ENCODE measurements at regions of chr3 and their contacts with region 1.

Region 1: GRCh38 chr3:158727206-158728060 is 4.8 kb downstream of the RARRES1 start:
- DNase-seq: no peak
- ATAC-seq: peak; percentile 65
- H3K4me3 ChIP-seq: peak overlapping the region; percentile 24
- H3K27ac ChIP-seq: peak overlapping the region; percentile 17
- H3K4me1 ChIP-seq: peaks cover 28% of the 10 kb centered on the region
- H3K27me3 ChIP-seq: no peaks in the 10 kb centered on the region
- CTCF ChIP-seq: peak; percentile 89

Region 2: GRCh38 chr3:158121295-158121694 is 606.1 kb before region 1 on chr3:
- intact Hi-C with region 1: no loop called
- DNase-seq: no peak
- ATAC-seq: no peak
- H3K4me3 ChIP-seq: no peak overlapping the region
- H3K27ac ChIP-seq: no peak overlapping the region
- H3K4me1 ChIP-seq: no peaks in the 10 kb centered on the region
- H3K27me3 ChIP-seq: no peaks in the 10 kb centered on the region
- CTCF ChIP-seq: no peak

Region 3: DNA sequence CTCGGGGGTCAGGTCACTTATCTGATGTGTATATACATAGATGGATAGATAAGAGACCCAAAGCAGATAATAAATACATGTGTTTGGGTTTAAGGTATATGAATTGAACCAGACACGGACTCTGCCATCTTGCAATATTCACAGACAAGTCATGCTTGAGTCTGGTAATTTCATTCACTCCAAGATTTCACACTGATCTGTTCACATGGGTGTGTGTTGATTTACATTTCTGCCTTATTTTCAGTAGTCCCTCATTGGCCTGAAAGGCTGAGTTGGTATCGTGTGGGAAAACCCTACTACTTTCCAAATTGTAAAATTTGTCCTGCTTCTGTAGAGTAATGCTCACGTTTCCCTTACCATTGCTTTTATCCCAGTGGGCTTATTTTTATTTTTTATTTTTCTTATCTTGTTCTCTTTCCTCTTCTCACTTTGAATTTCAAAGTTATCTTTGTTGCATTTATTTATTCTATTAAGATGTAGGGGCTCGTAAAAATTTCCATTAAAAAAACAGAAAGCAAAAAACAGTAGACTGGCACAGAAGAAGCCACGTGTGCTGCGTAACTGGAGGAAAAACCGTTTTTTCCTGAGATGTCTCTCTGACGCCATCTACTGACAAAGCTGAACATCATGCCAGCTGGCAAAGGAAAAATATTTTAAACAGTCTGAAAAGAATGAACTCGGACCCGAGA is 63.6 kb after region 1 on chr3:
- intact Hi-C with region 1: loop called (anchors 5 kb)
- DNase-seq: no peak
- ATAC-seq: peak; percentile 82
- H3K4me3 ChIP-seq: peak overlapping the region; percentile 22
- H3K27ac ChIP-seq: no peak overlapping the region
- H3K4me1 ChIP-seq: peaks cover 9% of the 10 kb centered on the region
- H3K27me3 ChIP-seq: no peaks in the 10 kb centered on the region
- CTCF ChIP-seq: peak; percentile 86

Region 4: DNA sequence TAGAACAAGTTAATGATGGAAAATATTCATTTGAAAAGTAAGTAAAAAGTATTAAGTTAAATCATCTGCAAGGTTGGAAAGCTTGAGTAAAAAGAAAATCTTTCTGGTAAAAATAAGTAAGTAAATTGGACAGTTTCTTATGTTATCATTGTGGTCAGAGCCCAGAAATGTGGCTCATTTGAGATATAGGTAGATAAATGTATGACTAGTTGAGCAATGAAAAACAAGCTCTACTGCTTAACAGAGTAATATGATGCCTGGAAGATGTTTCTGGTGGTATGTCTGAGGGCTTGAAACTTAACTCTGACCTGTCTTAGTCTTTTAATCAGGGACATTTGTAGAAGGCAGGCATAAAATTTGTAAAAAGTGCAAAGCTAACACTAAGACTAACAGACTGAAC is 518.4 kb after region 1 on chr3:
- intact Hi-C with region 1: no loop called
- DNase-seq: no peak
- ATAC-seq: no peak
- H3K4me3 ChIP-seq: no peak overlapping the region
- H3K27ac ChIP-seq: no peak overlapping the region
- H3K4me1 ChIP-seq: no peaks in the 10 kb centered on the region
- H3K27me3 ChIP-seq: no peaks in the 10 kb centered on the region
- CTCF ChIP-seq: no peak

Region 5: DNA sequence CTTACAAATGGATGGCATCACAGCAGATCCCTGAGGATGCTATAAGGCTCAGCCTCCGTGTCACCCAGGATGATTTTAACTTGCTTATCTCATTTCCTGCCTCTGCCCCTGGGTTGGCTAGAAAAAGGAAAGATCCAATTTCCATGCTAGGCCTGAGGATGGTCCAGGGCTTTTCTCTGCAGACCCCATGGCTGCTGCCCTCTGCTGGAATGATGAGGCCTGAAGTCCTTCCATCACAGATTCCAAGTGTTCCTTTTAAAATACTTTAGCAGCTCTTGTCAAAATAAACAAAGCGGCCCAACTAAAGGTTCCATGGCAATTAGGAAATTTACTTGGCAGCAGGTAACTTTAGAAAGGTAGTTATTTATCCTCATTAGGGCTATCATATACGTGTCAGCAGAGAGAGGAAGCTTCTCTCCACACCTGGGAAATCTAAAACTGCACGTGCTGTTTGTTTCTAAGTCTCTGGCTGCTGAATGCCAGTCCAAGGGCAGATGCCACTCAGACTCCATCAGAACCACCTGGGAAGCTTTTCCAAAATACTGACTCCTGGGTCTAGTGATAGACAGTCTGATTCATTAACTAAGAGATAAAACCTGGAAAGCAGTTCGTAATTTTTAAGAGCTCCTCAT is 859.3 kb after region 1 on chr3:
- intact Hi-C with region 1: no loop called
- DNase-seq: no peak
- ATAC-seq: no peak
- H3K4me3 ChIP-seq: no peak overlapping the region
- H3K27ac ChIP-seq: no peak overlapping the region
- H3K4me1 ChIP-seq: no peaks in the 10 kb centered on the region
- H3K27me3 ChIP-seq: no peaks in the 10 kb centered on the region
- CTCF ChIP-seq: peak; percentile 20